Thyroid gland (tissue), 4 donors: ENCODE measurements at regions of chr6 and their contacts with region 1.

Region 1: GRCh38 chr6:20126789-20127653 is 85.2 kb downstream of the MBOAT1 start:
- DNase-seq: peak; percentile 75 to 79
- H3K4me3 ChIP-seq: no peak overlapping the region
- H3K27ac ChIP-seq: peak overlapping the region; percentile 51 to 70 (median 57)
- H3K4me1 ChIP-seq: peaks cover 7 to 30% of the 10 kb centered on the region in 2 donors
- H3K27me3 ChIP-seq: no peaks in the 10 kb centered on the region
- CTCF ChIP-seq: peak; percentile 78 to 93 (median 83)
- POLR2A ChIP-seq: no peak

Region 2: GRCh38 chr6:19892260-19892659 is 234.8 kb before region 1 on chr6:
- intact Hi-C with region 1: no loop called
- DNase-seq: peak; percentile 77
- H3K4me3 ChIP-seq: no peak overlapping the region
- H3K27ac ChIP-seq: no peak overlapping the region
- H3K4me1 ChIP-seq: no peaks in the 10 kb centered on the region
- H3K27me3 ChIP-seq: no peaks in the 10 kb centered on the region
- CTCF ChIP-seq: no peak
- POLR2A ChIP-seq: no peak

Region 3: GRCh38 chr6:20092071-20092566 is 34.9 kb before region 1 on chr6:
- intact Hi-C with region 1: loop called (anchors 5 kb)
- DNase-seq: no peak
- H3K4me3 ChIP-seq: no peak overlapping the region
- H3K27ac ChIP-seq: no peak overlapping the region
- H3K4me1 ChIP-seq: peaks cover 0 to 4% of the 10 kb centered on the region in 2 donors
- H3K27me3 ChIP-seq: no peaks in the 10 kb centered on the region
- CTCF ChIP-seq: peak; percentile 65 to 96 (median 71)
- POLR2A ChIP-seq: no peak